ENCODE measurements at regions of chr2 and their contacts with region 1.

Region 1: GRCh38 chr2:204691911-204692510 is 146.7 kb downstream of the PARD3B start:
- DNase-seq: no peak
- ATAC-seq: peak; percentile 80

Region 2: GRCh38 chr2:204293884-204294747 is 397.9 kb before region 1 on chr2:
- intact Hi-C with region 1: no loop called
- DNase-seq: no peak
- ATAC-seq: no peak

Region 3: DNA sequence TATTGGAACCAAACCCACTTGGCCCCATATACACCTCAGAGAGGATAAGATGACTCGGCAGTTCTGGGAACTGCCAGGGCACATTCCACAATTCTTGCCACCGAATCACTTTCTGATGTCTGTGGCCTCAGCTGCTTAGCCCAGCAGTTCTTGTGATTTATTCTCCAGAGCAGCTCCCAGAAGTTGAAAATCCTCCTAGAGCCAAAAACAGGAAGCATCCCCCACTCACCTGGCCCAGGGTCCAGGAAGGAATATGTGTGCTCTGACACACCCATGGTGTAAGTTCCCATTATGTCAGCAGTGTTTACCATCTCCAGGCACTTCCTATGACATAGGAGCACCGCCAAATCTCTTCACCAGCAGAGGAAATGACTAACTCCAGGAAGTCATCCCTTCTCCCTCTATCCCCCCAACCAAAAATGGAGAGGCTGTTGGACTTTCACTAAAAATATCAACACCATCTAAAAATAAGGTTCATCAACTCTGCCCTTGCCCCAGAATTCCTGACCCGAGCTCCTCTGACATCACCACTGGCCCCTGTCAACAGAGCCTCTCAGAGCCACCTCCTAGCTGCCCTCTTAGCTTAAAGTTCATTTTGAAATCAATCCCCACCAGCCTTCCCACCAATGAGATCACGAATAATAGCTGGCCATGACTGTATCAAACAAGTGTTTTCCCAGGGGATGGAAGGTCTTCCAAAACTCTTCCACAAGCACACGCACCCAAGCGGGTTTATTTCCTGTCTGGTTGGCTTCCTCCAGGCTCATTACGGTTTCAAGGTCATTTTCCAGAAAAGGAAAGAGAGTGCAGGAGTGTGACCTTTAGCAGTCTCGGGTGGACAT is 369.9 kb before region 1 on chr2:
- intact Hi-C with region 1: loop called (anchors 5 kb)
- DNase-seq: no peak
- ATAC-seq: peak; percentile 78

Region 4: GRCh38 chr2:204415406-204416181 is 276.4 kb before region 1 on chr2:
- intact Hi-C with region 1: no loop called
- DNase-seq: no peak
- ATAC-seq: no peak

Region 5: GRCh38 chr2:204871231-204871953 is 179.4 kb after region 1 on chr2:
- intact Hi-C with region 1: no loop called
- DNase-seq: no peak
- ATAC-seq: peak; percentile 39

Region 6: DNA sequence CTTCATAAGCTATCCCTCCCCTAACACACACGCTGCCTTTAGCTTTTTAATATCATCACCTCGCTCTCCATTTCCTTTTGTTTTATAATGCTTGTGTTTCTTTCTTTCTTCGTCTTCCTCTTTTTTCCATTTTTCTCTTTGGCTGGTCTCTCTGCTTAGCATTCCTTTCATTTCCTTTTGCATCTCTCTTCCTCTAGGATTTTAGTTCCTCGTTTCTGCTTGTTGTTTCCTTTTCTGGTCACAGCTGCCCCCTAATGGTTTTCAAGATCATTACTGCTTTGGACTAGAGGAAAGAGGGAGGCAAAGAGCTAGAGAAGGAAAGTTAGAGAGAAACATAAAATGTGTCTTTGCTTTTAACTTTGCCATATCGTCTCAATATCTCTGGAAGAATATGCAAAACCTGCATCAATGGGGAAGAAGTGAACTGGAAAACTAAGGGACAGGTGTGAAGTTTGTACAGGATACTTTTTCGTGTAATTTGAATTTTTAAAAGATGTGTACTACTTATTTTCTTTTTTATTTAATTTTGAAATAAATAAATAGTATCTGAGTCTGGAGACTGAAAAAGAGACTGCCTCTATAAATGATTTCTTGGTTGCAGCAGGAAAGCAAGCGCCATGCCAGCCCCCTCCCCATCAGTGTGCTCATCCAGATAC is 984.0 kb after region 1 on chr2:
- intact Hi-C with region 1: loop called (anchors 10 kb)
- DNase-seq: no peak
- ATAC-seq: peak; percentile 58